ENCODE measurements at regions of chrX and their contacts with region 1.

Region 1: DNA sequence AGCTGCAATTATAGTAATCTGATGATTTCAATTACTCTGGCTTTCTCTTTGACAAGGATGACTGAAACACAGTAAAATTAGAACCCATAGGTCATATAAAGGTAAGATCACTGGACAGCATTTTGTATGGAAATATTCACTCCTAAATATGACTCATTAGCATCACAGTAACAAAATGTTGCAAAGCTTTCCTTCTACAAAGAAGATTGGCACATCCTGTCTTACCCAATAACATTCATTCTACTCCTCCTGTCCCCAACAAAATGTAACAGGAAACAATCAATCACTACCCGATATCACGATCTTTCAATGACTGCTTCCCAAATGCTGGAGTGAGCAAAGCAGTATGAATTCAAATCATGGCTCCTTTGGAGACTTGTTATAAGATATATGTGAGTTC is 95.3 kb downstream of the FANCB start:
- DNase-seq: no peak

Region 2: GRCh38 chrX:14832151-14832550 is 54.6 kb after region 1 on chrX:
- intact Hi-C with region 1: loop called (anchors 10 kb)
- DNase-seq: no peak

Region 3: GRCh38 chrX:15524417-15524816 is 746.9 kb after region 1 on chrX:
- intact Hi-C with region 1: no loop called
- DNase-seq: no peak

Measured in head of caudate nucleus (tissue), 42 donors.